Endothelial cell of umbilical vein (primary cell): ENCODE measurements at regions of chr15 and their contacts with region 1.

Region 1: GRCh38 chr15:101008158-101009139 is 89.3 kb downstream of the LRRK1 start:
- DNase-seq: peak; percentile 89
- H3K4me3 ChIP-seq: peak overlapping the region in 2 of 3 experiments; percentile 26 to 33
- H3K27ac ChIP-seq: no peak overlapping the region
- H3K4me1 ChIP-seq: peaks cover 6% of the 10 kb centered on the region
- H3K27me3 ChIP-seq: no peaks in the 10 kb centered on the region
- CTCF ChIP-seq: peak; percentile 98 to 100
- POLR2A ChIP-seq: no peak

Region 2: DNA sequence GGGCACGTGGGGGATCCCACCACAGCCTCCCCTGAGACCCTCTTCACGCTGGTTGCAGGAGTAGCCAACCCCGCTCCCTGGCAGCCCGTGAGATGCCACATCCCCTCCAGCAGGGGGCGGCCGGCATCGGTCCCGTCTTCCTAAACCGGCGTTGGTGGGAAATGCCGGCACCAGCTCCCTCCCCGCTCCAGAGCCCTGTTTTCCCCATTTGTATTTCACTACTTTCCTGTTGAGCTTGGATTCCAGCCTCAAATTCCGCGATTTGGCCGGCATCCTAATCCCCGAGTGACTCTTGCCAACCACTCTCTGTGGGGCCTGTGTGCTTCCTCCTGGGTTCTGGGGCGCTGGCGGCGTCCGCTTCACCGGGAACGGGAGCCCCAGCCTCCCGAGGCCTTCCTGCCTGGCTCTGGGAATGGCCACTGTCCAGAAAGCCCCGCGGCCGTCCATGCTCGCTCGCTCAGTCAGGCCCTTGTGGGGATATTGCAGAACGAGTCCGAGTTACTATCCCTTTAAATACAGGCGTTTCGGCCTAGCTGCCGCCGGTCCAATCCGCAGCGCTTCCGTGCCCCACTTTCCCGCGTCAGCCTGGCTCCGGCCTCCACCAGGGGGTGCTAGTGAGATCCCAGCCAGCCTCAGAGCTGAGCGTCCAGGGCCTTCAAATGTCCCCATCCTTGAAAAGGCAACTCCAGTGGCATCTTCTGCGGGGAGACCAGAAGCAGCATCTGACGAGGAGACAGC is 658.6 kb before region 1 on chr15:
- CTCF ChIA-PET with region 1: interaction called, 26 read pairs
- POLR2A ChIA-PET with region 1: no interaction called
- dilution Hi-C with region 1: no loop called
- intact Hi-C with region 1: loop called (anchors 1 kb)
- DNase-seq: peak; percentile 81
- H3K4me3 ChIP-seq: peak overlapping the region; percentile 18 to 59 (median 55)
- H3K27ac ChIP-seq: no peak overlapping the region
- H3K4me1 ChIP-seq: no peaks in the 10 kb centered on the region
- H3K27me3 ChIP-seq: no peaks in the 10 kb centered on the region
- CTCF ChIP-seq: peak; percentile 89 to 98
- POLR2A ChIP-seq: no peak

Region 3: GRCh38 chr15:100671858-100672543 is 336.4 kb before region 1 on chr15:
- CTCF ChIA-PET with region 1: interaction called, 9 read pairs
- POLR2A ChIA-PET with region 1: no interaction called
- dilution Hi-C with region 1: no loop called
- intact Hi-C with region 1: loop called (anchors 1 kb)
- DNase-seq: peak; percentile 42
- H3K4me3 ChIP-seq: no peak overlapping the region
- H3K27ac ChIP-seq: no peak overlapping the region
- H3K4me1 ChIP-seq: no peaks in the 10 kb centered on the region
- H3K27me3 ChIP-seq: no peaks in the 10 kb centered on the region
- CTCF ChIP-seq: peak; percentile 50 to 60
- POLR2A ChIP-seq: no peak

Region 4: GRCh38 chr15:100889385-100890050 is 118.9 kb before region 1 on chr15:
- CTCF ChIA-PET with region 1: interaction called, 15 read pairs
- POLR2A ChIA-PET with region 1: no interaction called
- dilution Hi-C with region 1: no loop called
- intact Hi-C with region 1: no loop called
- DNase-seq: peak; percentile 85
- H3K4me3 ChIP-seq: peak overlapping the region in 1 of 3 experiments; percentile 3
- H3K27ac ChIP-seq: peak overlapping the region; percentile 43
- H3K4me1 ChIP-seq: peaks cover 35% of the 10 kb centered on the region
- H3K27me3 ChIP-seq: no peaks in the 10 kb centered on the region
- CTCF ChIP-seq: no peak
- POLR2A ChIP-seq: peak; percentile 50

Region 5: GRCh38 chr15:100944244-100944895 is 64.1 kb before region 1 on chr15:
- CTCF ChIA-PET with region 1: interaction called, 35 read pairs
- POLR2A ChIA-PET with region 1: no interaction called
- dilution Hi-C with region 1: no loop called
- intact Hi-C with region 1: no loop called
- DNase-seq: peak; percentile 43
- H3K4me3 ChIP-seq: no peak overlapping the region
- H3K27ac ChIP-seq: no peak overlapping the region
- H3K4me1 ChIP-seq: no peaks in the 10 kb centered on the region
- H3K27me3 ChIP-seq: no peaks in the 10 kb centered on the region
- CTCF ChIP-seq: no peak
- POLR2A ChIP-seq: no peak

Region 6: GRCh38 chr15:100981086-100981485 is 27.4 kb before region 1 on chr15:
- CTCF ChIA-PET with region 1: interaction called, 25 read pairs
- POLR2A ChIA-PET with region 1: no interaction called
- dilution Hi-C with region 1: no loop called
- intact Hi-C with region 1: no loop called
- DNase-seq: no peak
- H3K4me3 ChIP-seq: no peak overlapping the region
- H3K27ac ChIP-seq: no peak overlapping the region
- H3K4me1 ChIP-seq: no peaks in the 10 kb centered on the region
- H3K27me3 ChIP-seq: no peaks in the 10 kb centered on the region
- CTCF ChIP-seq: no peak
- POLR2A ChIP-seq: no peak